Testis (tissue), 5 donors: ENCODE measurements at regions of chr12 and their contacts with region 1.

Region 1: GRCh38 chr12:19726122-19726521 is 286.8 kb downstream of the AEBP2 start:
- DNase-seq: no peak
- H3K4me3 ChIP-seq: no peak overlapping the region
- H3K27ac ChIP-seq: no peak overlapping the region
- H3K4me1 ChIP-seq: no peaks in the 10 kb centered on the region
- H3K27me3 ChIP-seq: no peaks in the 10 kb centered on the region
- CTCF ChIP-seq: no peak
- POLR2A ChIP-seq: no peak

Region 2: DNA sequence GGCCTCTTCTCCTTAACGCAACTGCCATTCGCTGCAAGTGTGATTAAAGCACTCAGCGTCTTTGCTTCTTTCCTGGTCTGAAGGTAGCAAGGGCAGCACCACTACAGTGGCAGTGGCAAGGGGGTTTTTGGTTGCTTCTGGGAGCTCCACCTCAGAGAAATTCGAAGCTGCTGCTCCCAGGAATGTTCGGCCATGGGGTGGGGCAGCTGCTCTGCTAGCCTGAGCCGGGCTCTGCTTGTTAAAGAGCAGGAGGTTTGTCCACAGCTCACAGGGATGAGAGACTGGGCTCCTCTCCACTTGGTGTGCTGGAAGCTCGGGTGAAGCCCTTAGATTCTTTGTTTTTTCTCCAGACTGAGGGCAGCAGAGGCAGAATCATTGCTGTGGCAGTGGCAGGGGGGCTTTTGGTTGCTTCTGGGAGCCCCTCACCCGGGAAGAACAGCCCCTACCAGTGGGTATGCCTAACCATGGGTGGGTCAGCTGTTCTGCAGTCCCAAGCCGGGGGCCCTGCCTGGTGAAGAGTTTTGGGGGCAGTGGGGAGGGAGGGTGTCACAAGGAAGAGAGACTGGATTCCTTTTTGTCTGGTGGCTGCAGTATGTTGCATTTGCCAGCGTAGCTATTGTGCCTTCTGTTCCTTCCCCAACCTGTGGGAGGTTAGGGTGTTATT is 53.4 kb after region 1 on chr12:
- intact Hi-C with region 1: loop called (anchors 10 kb)
- DNase-seq: peak; percentile 28
- H3K4me3 ChIP-seq: no peak overlapping the region
- H3K27ac ChIP-seq: no peak overlapping the region
- H3K4me1 ChIP-seq: no peaks in the 10 kb centered on the region
- H3K27me3 ChIP-seq: no peaks in the 10 kb centered on the region
- CTCF ChIP-seq: no peak
- POLR2A ChIP-seq: no peak

Region 3: GRCh38 chr12:20492251-20492728 is 766.2 kb after region 1 on chr12:
- intact Hi-C with region 1: no loop called
- DNase-seq: no peak
- H3K4me3 ChIP-seq: no peak overlapping the region
- H3K27ac ChIP-seq: no peak overlapping the region
- H3K4me1 ChIP-seq: no peaks in the 10 kb centered on the region
- H3K27me3 ChIP-seq: no peaks in the 10 kb centered on the region
- CTCF ChIP-seq: no peak
- POLR2A ChIP-seq: no peak